ENCODE measurements at regions of chr10 and their contacts with region 1.

Region 1: DNA sequence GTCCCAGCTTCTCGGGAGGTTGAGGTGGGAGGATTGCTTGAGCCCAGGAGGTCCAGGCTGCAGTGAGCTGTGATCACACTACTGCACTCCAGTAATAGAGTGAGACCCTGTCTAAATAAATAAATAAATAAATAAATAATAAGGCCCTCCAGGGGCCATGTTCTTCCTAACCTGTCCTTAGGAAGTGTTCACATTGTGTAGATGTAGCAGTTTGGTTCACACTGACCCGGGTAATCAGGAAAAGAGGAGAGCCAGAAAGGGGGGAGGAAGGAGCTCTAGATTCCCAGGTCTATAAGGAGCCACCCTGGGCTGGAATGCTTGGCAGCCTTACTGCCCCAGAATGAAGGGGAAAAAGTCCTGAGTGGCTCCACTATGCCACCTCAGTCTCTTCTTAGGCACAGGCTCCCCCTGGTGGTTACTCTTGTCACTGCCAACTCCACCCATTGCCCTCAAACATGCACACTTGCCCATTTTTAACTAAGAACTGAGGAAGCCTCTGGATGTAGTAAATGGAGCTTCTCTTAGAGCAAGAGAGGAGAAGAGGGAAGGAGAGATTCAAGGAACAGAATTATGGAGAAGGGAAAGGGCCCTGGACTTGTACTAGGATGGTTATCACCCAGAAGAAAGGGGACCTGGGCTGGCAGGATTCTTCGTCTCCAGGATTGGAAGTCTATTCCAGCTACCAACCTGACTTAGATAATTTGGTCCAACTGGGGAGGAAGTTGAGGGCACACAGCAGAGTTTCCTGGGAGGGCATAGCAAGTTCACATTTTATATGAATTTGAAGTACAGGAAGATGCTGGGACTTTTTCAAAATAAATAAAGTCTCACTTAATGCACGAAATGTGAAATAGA is 7.8 kb downstream of the HPS6 start:
- DNase-seq: peak; percentile 54 to 81 (median 73)
- ATAC-seq: peak; percentile 94
- H3K4me3 ChIP-seq: no peak overlapping the region
- H3K4me3 Mint-ChIP-seq: no peak overlapping the region
- H3K27ac ChIP-seq: no peak overlapping the region
- H3K27ac Mint-ChIP-seq: peak overlapping the region in 1 of 9 donors; percentile 13
- H3K4me1 ChIP-seq: no peaks in the 10 kb centered on the region
- H3K4me1 Mint-ChIP-seq: peaks cover 0 to 17% (median 13%) of the 10 kb centered on the region in 7 donors
- H3K27me3 ChIP-seq: no peaks in the 10 kb centered on the region
- H3K27me3 Mint-ChIP-seq: no peaks in the 10 kb centered on the region

Region 2: GRCh38 chr10:101161494-101162299 is 911.2 kb before region 1 on chr10:
- CTCF ChIA-PET with region 1: no interaction called
- POLR2A ChIA-PET with region 1: no interaction called
- intact Hi-C with region 1: loop called in 1 of 2 experiments (anchors 2 kb)
- DNase-seq: peak; percentile 45 to 71 (median 65)
- ATAC-seq: peak; percentile 96
- H3K4me3 ChIP-seq: no peak overlapping the region
- H3K4me3 Mint-ChIP-seq: peak overlapping the region in 5 of 10 donors; percentile 20 to 51 (median 30)
- H3K27ac ChIP-seq: no peak overlapping the region
- H3K27ac Mint-ChIP-seq: peak overlapping the region in 1 of 9 donors; percentile 26
- H3K4me1 ChIP-seq: no peaks in the 10 kb centered on the region
- H3K4me1 Mint-ChIP-seq: peaks cover 9 to 16% (median 12%) of the 10 kb centered on the region in 7 donors
- H3K27me3 ChIP-seq: peaks cover 6 to 15% of the 10 kb centered on the region in 2 donors
- H3K27me3 Mint-ChIP-seq: peaks cover 49 to 78% (median 70%) of the 10 kb centered on the region in 5 donors

Region 3: GRCh38 chr10:101602761-101603398 is 470.0 kb before region 1 on chr10:
- CTCF ChIA-PET with region 1: no interaction called
- POLR2A ChIA-PET with region 1: no interaction called
- intact Hi-C with region 1: loop called in 1 of 2 experiments (anchors 5 kb)
- DNase-seq: peak; percentile 20 to 80 (median 45)
- ATAC-seq: peak; percentile 86
- H3K4me3 ChIP-seq: no peak overlapping the region
- H3K4me3 Mint-ChIP-seq: no peak overlapping the region
- H3K27ac ChIP-seq: no peak overlapping the region
- H3K27ac Mint-ChIP-seq: peak overlapping the region in 4 of 9 donors; percentile 12 to 81 (median 48)
- H3K4me1 ChIP-seq: no peaks in the 10 kb centered on the region
- H3K4me1 Mint-ChIP-seq: peaks cover 0 to 3% (median 0%) of the 10 kb centered on the region in 7 donors
- H3K27me3 ChIP-seq: no peaks in the 10 kb centered on the region
- H3K27me3 Mint-ChIP-seq: no peaks in the 10 kb centered on the region

Region 4: GRCh38 chr10:101867931-101868330 is 205.0 kb before region 1 on chr10:
- CTCF ChIA-PET with region 1: no interaction called
- POLR2A ChIA-PET with region 1: no interaction called
- intact Hi-C with region 1: no loop called
- DNase-seq: no peak
- ATAC-seq: no peak
- H3K4me3 ChIP-seq: no peak overlapping the region
- H3K4me3 Mint-ChIP-seq: no peak overlapping the region
- H3K27ac ChIP-seq: no peak overlapping the region
- H3K27ac Mint-ChIP-seq: no peak overlapping the region
- H3K4me1 ChIP-seq: no peaks in the 10 kb centered on the region
- H3K4me1 Mint-ChIP-seq: peaks cover 0 to 2% (median 0%) of the 10 kb centered on the region in 7 donors
- H3K27me3 ChIP-seq: no peaks in the 10 kb centered on the region
- H3K27me3 Mint-ChIP-seq: no peaks in the 10 kb centered on the region

Region 5: GRCh38 chr10:101889256-101890210 is 183.4 kb before region 1 on chr10:
- CTCF ChIA-PET with region 1: interaction called, 19 read pairs
- POLR2A ChIA-PET with region 1: no interaction called
- intact Hi-C with region 1: loop called (anchors 1 kb)
- DNase-seq: peak; percentile 15 to 66 (median 53)
- ATAC-seq: peak; percentile 78
- H3K4me3 ChIP-seq: no peak overlapping the region
- H3K4me3 Mint-ChIP-seq: no peak overlapping the region
- H3K27ac ChIP-seq: no peak overlapping the region
- H3K27ac Mint-ChIP-seq: peak overlapping the region in 4 of 9 donors; percentile 9 to 46 (median 35)
- H3K4me1 ChIP-seq: no peaks in the 10 kb centered on the region
- H3K4me1 Mint-ChIP-seq: peaks cover 0 to 6% (median 2%) of the 10 kb centered on the region in 7 donors
- H3K27me3 ChIP-seq: no peaks in the 10 kb centered on the region
- H3K27me3 Mint-ChIP-seq: no peaks in the 10 kb centered on the region

Region 6: DNA sequence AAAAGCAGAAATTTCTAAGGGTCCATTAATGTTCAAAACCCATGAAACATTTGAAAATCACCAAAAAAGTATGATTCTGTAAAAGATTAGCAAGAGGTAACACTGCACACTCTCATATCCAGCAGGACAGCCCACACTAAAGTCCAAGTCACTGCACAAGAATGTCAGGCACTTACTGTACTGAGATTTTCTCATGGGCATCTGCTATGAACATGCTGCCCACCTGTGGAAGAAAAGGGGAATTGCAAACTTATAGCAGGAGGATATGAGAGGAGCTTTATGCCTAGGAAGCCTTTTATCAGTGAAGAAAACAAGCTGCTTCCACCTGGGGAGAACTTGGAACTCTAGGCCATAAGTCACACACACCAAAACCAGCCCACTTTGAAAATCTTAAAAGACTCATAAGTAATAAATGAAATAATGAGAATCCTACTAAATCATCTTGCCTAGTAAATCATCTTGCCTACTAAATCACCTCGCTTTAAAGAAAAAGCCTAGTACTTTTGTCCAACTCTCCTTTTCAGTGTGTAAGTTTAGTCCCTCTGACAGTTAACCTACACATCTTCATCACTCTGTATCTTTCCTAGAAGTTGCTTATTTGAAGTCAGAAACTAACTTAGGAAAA is 63.0 kb before region 1 on chr10:
- CTCF ChIA-PET with region 1: interaction called, 11 read pairs
- POLR2A ChIA-PET with region 1: no interaction called
- intact Hi-C with region 1: loop called (anchors 1 kb)
- DNase-seq: peak in 8 of 9 donors; percentile 33 to 66 (median 52)
- ATAC-seq: peak; percentile 86
- H3K4me3 ChIP-seq: no peak overlapping the region
- H3K4me3 Mint-ChIP-seq: no peak overlapping the region
- H3K27ac ChIP-seq: no peak overlapping the region
- H3K27ac Mint-ChIP-seq: peak overlapping the region in 4 of 9 donors; percentile 12 to 39 (median 20)
- H3K4me1 ChIP-seq: no peaks in the 10 kb centered on the region
- H3K4me1 Mint-ChIP-seq: peaks cover 0 to 13% (median 4%) of the 10 kb centered on the region in 7 donors
- H3K27me3 ChIP-seq: no peaks in the 10 kb centered on the region
- H3K27me3 Mint-ChIP-seq: no peaks in the 10 kb centered on the region

Region 7: GRCh38 chr10:102055647-102056419 is 17.1 kb before region 1 on chr10 and contains the start of gene ARMH3:
- CTCF ChIA-PET with region 1: interaction called, 5 read pairs
- POLR2A ChIA-PET with region 1: interaction called, 11 read pairs
- intact Hi-C with region 1: loop called in 1 of 2 experiments (anchors 2 kb)
- DNase-seq: peak; percentile 72 to 90 (median 87)
- ATAC-seq: peak; percentile 98
- H3K4me3 ChIP-seq: peak within 1 kb of the TSS; percentile 92
- H3K4me3 Mint-ChIP-seq: peak within 1 kb of the TSS; percentile 89 to 98 (median 94)
- H3K27ac ChIP-seq: peak within 1 kb of the TSS; percentile 87
- H3K27ac Mint-ChIP-seq: peak within 1 kb of the TSS; percentile 76 to 97 (median 92)
- H3K4me1 ChIP-seq: peaks cover 18 to 20% of the 10 kb centered on the region in 2 donors
- H3K4me1 Mint-ChIP-seq: peaks cover 25 to 50% (median 42%) of the 10 kb centered on the region in 7 donors
- H3K27me3 ChIP-seq: no peaks in the 10 kb centered on the region
- H3K27me3 Mint-ChIP-seq: no peaks in the 10 kb centered on the region
- total RNA-seq, gene ARMH3: 26.7 to 34.0 (median 28.8) TPM

Region 8: GRCh38 chr10:102872163-102872562 is 799.3 kb after region 1 on chr10:
- CTCF ChIA-PET with region 1: no interaction called
- POLR2A ChIA-PET with region 1: no interaction called
- intact Hi-C with region 1: no loop called
- DNase-seq: no peak
- ATAC-seq: no peak
- H3K4me3 ChIP-seq: no peak overlapping the region
- H3K4me3 Mint-ChIP-seq: no peak overlapping the region
- H3K27ac ChIP-seq: no peak overlapping the region
- H3K27ac Mint-ChIP-seq: peak overlapping the region in 1 of 9 donors; percentile 46
- H3K4me1 ChIP-seq: peaks cover 0 to 4% of the 10 kb centered on the region in 2 donors
- H3K4me1 Mint-ChIP-seq: peaks cover 7 to 20% (median 10%) of the 10 kb centered on the region in 7 donors
- H3K27me3 ChIP-seq: peaks cover 0 to 3% of the 10 kb centered on the region in 2 donors
- H3K27me3 Mint-ChIP-seq: peaks cover 19 to 27% (median 21%) of the 10 kb centered on the region in 5 donors

Measured in naive thymus-derived CD4-positive, alpha-beta T cell (primary cell).